Upper lobe of right lung (tissue), 1 donor: ENCODE measurements at regions of chr18 and their contacts with region 1.

Region 1: DNA sequence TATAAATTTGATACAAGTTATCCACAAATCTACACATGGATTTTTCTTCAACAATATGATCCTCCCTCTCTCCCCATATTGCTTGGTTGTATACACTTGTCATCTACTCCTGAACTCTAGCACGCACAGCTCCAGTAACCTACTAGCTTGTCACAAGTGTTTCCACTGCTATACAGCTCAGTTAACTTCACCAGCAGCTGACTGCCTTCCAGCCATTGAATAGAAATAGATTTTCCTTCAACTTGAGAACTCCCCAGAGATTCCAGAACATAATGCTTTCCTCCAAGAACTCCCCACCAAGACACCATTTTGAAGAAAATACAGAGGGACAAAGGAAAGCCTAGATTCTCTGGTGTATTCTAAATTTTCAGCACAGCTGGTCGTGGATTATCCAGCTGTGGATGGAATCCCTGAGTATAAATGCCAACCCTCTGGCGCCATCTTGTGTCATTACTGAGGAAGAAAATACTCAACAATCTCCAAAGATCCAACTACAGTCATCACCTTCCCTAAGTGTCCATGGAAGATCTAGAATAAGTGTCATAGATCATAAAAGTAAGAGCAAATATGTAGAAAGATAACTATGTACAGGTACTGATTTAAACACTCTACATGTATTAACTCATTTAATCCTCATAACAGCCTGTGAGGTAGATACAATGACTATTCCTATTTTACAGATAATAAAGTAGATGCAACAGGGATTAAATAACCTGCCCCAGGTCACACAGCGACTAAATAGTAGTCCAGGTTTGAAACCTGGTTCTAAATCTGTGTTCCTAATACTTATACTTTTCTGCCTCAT is 156.7 kb downstream of the ARHGAP28 start:
- DNase-seq: no peak
- ATAC-seq: peak; percentile 80
- H3K4me3 ChIP-seq: no peak overlapping the region
- H3K27ac ChIP-seq: no peak overlapping the region
- H3K4me1 ChIP-seq: peaks cover 4% of the 10 kb centered on the region
- H3K27me3 ChIP-seq: no peaks in the 10 kb centered on the region
- CTCF ChIP-seq: peak; percentile 72

Region 2: GRCh38 chr18:6557053-6557779 is 329.0 kb before region 1 on chr18:
- intact Hi-C with region 1: loop called (anchors 10 kb)
- DNase-seq: no peak
- ATAC-seq: no peak
- H3K4me3 ChIP-seq: no peak overlapping the region
- H3K27ac ChIP-seq: no peak overlapping the region
- H3K4me1 ChIP-seq: peaks cover 6% of the 10 kb centered on the region
- H3K27me3 ChIP-seq: no peaks in the 10 kb centered on the region
- CTCF ChIP-seq: no peak

Region 3: GRCh38 chr18:6795307-6795706 is 90.9 kb before region 1 on chr18:
- intact Hi-C with region 1: no loop called
- DNase-seq: no peak
- ATAC-seq: peak; percentile 53
- H3K4me3 ChIP-seq: no peak overlapping the region
- H3K27ac ChIP-seq: peak overlapping the region; percentile 25
- H3K4me1 ChIP-seq: no peaks in the 10 kb centered on the region
- H3K27me3 ChIP-seq: no peaks in the 10 kb centered on the region
- CTCF ChIP-seq: no peak